Activated naive CD4-positive, alpha-beta T cell treated with anti-CD3 and anti-CD28 coated beads for 36 hours (primary cell): ENCODE measurements at regions of chr2 and their contacts with region 1.

Region 1: DNA sequence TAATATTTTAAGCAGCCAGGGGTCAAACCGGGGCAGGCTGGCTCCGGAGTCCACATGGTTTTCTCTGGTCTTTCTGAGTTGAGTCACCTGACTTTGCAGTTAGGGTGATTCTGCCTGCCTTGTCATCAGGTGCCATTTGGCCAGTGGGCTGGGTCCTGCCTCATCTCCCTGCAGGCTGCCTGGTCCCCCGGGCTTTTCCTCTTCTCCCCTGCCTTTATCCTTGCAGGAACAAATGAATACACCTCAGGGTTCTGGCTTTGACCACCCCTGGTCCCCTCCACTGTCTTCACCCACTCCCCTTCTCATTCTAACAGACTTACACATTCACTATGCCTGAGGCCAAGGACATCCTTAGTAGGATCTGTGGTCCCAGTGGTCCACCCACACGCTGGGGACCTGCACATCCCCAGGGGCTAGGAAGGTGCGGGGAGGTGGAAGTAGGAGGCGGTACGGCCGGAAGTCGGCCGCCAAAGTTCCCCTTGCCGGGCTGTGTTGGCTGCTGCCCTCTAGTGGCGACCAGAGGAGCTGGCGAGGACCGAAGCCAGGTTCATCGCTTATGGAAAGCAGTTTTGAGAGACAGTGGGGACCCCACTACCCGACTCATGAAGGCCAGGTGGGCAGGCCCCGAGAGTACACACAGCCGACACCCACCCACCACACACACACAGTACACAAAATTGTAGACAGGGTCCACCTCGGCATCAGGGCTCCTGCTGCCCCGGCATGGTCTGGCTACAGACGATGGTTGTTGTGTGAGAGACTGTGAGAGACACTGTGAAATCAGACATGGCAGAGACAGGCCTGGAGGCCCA is 6.3 kb upstream of the TEX261 start:
- DNase-seq: peak; percentile 91
- H3K4me3 Mint-ChIP-seq: peak overlapping the region; percentile 73
- H3K27ac Mint-ChIP-seq: peak overlapping the region; percentile 63
- H3K4me1 Mint-ChIP-seq: peaks cover 16% of the 10 kb centered on the region
- H3K27me3 Mint-ChIP-seq: no peaks in the 10 kb centered on the region

Region 2: GRCh38 chr2:70871398-70872211 is 129.4 kb before region 1 on chr2:
- CTCF ChIA-PET with region 1: interaction called, 3 read pairs
- intact Hi-C with region 1: loop called (anchors 5 kb)
- DNase-seq: peak; percentile 90
- H3K4me3 Mint-ChIP-seq: no peak overlapping the region
- H3K27ac Mint-ChIP-seq: no peak overlapping the region
- H3K4me1 Mint-ChIP-seq: peaks cover 5% of the 10 kb centered on the region
- H3K27me3 Mint-ChIP-seq: peaks cover 32% of the 10 kb centered on the region

Region 3: DNA sequence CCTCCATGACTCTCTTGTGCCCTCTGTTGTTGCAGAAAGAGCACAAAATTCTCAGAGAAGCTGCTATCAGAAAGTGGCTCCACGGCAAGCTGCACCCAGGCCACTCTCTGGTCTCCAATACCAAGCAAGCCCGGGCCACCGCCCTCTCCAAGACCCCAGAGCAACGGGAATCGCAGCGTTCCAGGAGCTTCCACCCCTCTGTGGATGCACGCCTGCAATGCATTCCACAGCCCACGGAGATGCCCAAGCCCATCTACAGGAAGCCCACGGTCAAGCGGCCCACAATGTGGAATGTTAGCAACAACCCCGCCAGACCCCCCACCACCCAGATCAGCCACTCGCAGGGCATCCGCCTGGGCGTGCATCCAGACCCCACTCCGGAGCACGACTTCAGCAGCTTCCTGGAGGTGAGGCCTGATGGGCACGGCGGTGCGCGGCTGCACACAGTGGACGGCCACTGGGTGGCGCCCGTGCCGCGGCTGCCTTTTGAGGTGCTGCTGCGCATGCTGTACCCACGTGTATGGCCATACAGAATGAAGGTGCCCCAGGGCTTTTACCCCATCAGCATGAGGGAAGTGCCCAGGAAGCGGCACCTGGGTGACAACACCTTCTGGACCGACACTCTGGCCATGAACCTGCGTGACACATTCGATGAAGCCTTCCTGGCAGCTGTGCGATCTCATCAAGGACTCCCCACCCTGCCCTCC is 16.3 kb before region 1 on chr2:
- CTCF ChIA-PET with region 1: interaction called, 27 read pairs
- intact Hi-C with region 1: loop called (anchors 1 kb)
- DNase-seq: peak; percentile 88
- H3K4me3 Mint-ChIP-seq: no peak overlapping the region
- H3K27ac Mint-ChIP-seq: no peak overlapping the region
- H3K4me1 Mint-ChIP-seq: peaks cover 15% of the 10 kb centered on the region
- H3K27me3 Mint-ChIP-seq: no peaks in the 10 kb centered on the region